ENCODE measurements at regions of chr10 and their contacts with region 1.

Region 1: DNA sequence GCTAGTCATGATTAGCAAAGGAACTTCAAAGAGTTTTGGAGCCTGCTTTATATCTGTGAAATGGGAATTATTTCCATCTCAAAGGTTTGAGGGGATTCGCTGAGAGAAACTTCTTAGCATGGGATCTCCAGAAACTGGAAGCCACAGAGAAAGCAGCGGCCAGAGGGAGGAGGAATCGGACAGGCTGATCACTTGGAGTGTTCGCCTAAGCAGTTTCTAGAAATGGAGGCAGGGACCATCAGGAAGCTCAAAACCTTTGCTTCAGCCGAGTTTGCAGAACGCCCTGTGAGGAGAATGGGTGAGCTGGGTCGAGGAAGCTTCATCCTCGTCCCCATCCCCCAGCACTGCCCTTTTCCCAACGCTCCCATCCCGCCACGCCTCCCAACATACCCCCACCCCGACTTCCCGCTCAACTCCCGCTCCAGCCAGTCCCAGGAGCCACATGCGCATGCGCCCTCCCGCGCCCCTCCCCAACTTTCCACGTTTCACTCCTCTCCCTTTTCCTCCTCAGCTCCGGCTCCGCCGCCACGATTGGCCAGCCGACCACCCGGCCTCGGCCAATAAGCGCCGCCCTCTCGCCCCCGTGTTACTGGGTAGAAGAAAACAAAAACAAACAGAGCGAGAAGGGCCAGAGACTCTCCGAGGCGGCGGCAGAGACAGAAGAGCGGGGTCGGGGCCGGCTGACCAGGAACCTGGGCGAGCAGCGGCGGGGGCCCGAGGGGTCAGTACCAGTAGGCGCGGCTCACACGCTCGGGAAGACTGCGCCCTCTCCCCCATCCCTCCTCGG is at the start of gene PDCD4:
- DNase-seq: peak; percentile 87 to 96 (median 94)
- ATAC-seq: peak; percentile 58
- H3K4me3 ChIP-seq: peak within 1 kb of the TSS; percentile 55 to 85
- H3K4me3 Mint-ChIP-seq: peak within 1 kb of the TSS; percentile 89
- H3K27ac ChIP-seq: peak within 1 kb of the TSS; percentile 78 to 97
- H3K27ac Mint-ChIP-seq: peak within 1 kb of the TSS; percentile 98
- H3K4me1 ChIP-seq: peaks cover 71% of the 10 kb centered on the region
- H3K4me1 Mint-ChIP-seq: peaks cover 67% of the 10 kb centered on the region
- H3K27me3 ChIP-seq: no peaks in the 10 kb centered on the region
- H3K27me3 Mint-ChIP-seq: no peaks in the 10 kb centered on the region
- CTCF ChIP-seq: no peak
- total RNA-seq, gene PDCD4: 672 to 688 TPM

Region 2: GRCh38 chr10:110834629-110835301 is 36.7 kb before region 1 on chr10:
- CTCF ChIA-PET with region 1: interaction called, 5 read pairs
- POLR2A ChIA-PET with region 1: interaction called, 5 read pairs
- intact Hi-C with region 1: loop called (anchors 1 to 5 kb)
- DNase-seq: peak in 7 of 9 experiments; percentile 22 to 77 (median 55)
- ATAC-seq: peak; percentile 89
- H3K4me3 ChIP-seq: no peak overlapping the region
- H3K4me3 Mint-ChIP-seq: peak overlapping the region; percentile 53
- H3K27ac ChIP-seq: peak overlapping the region; percentile 38 to 41
- H3K27ac Mint-ChIP-seq: peak overlapping the region; percentile 97
- H3K4me1 ChIP-seq: peaks cover 37% of the 10 kb centered on the region
- H3K4me1 Mint-ChIP-seq: peaks cover 43% of the 10 kb centered on the region
- H3K27me3 ChIP-seq: no peaks in the 10 kb centered on the region
- H3K27me3 Mint-ChIP-seq: no peaks in the 10 kb centered on the region
- CTCF ChIP-seq: no peak

Region 3: DNA sequence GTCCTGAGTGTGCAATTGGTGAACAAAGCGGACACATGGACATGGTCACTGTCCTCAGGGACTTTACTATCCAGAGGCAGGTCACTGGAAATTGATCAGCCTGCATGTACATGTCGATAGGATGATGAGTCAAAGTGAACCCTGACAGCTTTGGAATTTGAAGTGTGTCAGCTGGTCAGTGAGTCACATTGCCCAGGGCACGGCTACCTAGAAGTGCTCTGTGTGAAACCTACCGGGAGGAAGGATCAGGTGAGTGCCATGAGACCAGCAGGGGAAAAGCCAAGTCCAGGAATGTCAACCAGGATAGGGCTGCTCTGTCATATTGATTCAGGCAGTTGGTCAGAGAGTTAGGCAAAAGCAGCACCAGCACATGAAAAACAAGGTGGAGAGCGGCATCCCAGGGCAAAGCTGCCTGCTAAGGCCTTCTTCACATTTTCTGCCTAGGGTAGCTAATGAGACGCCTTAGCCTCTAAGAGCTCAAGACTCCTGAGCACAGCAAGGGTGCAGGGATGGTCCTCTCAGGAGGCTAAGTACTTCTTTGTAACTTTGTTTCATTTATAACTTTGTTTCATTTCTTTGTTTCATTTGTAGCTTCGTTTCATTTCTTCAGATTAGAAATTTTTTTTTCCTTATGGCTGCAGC is 19.1 kb before region 1 on chr10:
- CTCF ChIA-PET with region 1: interaction called, 15 read pairs
- POLR2A ChIA-PET with region 1: interaction called, 12 read pairs
- intact Hi-C with region 1: loop called in 1 of 2 experiments (anchors 2 kb)
- DNase-seq: peak in 2 of 9 experiments; percentile 10 to 47
- ATAC-seq: no peak
- H3K4me3 ChIP-seq: no peak overlapping the region
- H3K4me3 Mint-ChIP-seq: peak overlapping the region; percentile 38
- H3K27ac ChIP-seq: no peak overlapping the region
- H3K27ac Mint-ChIP-seq: peak overlapping the region; percentile 65
- H3K4me1 ChIP-seq: peaks cover 56% of the 10 kb centered on the region
- H3K4me1 Mint-ChIP-seq: peaks cover 80% of the 10 kb centered on the region
- H3K27me3 ChIP-seq: no peaks in the 10 kb centered on the region
- H3K27me3 Mint-ChIP-seq: no peaks in the 10 kb centered on the region
- CTCF ChIP-seq: no peak

Region 4: DNA sequence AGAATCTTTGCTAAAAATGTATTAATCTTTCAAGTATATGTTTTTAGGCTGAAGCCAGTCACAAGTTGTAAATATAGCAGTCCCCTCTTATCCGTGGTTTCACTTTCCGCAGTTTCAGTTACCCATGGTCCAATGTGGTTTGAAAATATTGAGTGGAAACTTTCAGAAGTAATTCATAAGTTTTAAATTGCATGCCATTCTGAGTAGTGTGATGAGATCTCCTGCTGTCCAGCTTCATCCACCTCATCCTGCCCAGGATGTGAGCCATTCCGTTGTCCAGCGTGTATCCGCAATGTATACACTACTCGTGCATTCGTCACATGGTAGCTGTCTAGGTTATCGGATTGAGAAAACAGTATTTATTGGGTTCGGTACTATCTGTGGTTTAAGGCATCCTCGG is 12.4 kb after region 1 on chr10:
- CTCF ChIA-PET with region 1: interaction called, 4 read pairs
- POLR2A ChIA-PET with region 1: interaction called, 6 read pairs
- intact Hi-C with region 1: loop called in 1 of 2 experiments (anchors 1 kb)
- DNase-seq: peak in 1 of 9 experiments; percentile 45
- ATAC-seq: peak; percentile 22
- H3K4me3 ChIP-seq: peak overlapping the region in 1 of 2 experiments; percentile 29
- H3K4me3 Mint-ChIP-seq: peak overlapping the region; percentile 74
- H3K27ac ChIP-seq: peak overlapping the region in 1 of 2 experiments; percentile 58
- H3K27ac Mint-ChIP-seq: peak overlapping the region; percentile 83
- H3K4me1 ChIP-seq: peaks cover 68% of the 10 kb centered on the region
- H3K4me1 Mint-ChIP-seq: peaks cover 76% of the 10 kb centered on the region
- H3K27me3 ChIP-seq: no peaks in the 10 kb centered on the region
- H3K27me3 Mint-ChIP-seq: no peaks in the 10 kb centered on the region
- CTCF ChIP-seq: no peak

Measured in CD8-positive, alpha-beta T cell (primary cell).